Posterior vena cava (tissue), 2 donors: ENCODE measurements at regions of chrX and their contacts with region 1.

Region 1: GRCh38 chrX:129211350-129211749 is 311.9 kb downstream of the SMARCA1 start:
- DNase-seq: no peak

Region 2: DNA sequence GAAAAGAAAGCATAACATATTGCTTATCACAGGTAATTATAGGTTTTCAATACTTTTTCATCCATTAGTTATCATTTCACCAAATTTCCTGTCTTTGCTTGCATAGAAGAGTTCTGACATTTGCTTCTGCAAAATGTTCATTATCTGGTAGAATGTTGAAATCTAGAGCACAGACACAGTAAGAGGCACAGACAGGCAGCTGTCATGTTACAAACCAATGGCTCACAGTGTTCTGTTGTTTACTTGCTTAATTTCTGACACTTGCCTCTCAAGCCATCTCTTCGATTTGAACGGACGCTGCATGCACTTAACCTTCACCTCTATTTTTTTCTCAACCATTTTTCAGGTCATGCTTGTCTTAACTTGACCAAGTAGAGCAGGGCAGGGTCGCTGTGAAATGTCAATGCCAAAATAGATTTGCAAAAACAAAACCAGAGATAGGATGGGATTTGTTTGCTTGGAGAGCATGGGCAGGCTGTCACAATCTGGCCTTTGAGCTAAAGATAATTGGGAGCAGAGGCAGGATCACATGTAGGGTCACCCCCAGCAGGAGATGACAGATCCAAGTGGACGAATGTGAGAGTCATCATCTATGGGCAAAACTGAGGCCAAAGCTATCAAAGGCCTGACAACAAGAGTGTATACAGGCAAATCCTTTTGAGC is 19.6 kb after region 1 on chrX:
- intact Hi-C with region 1: loop called in 1 of 2 experiments (anchors 1 kb)
- DNase-seq: no peak